ENCODE measurements at regions of chr6 and their contacts with region 1.

Region 1: GRCh38 chr6:133348846-133349245 is 107.7 kb downstream of the EYA4 start:
- DNase-seq: no peak
- ATAC-seq: no peak
- H3K4me3 ChIP-seq: no peak overlapping the region
- H3K27ac ChIP-seq: no peak overlapping the region
- H3K4me1 ChIP-seq: peaks cover 55% of the 10 kb centered on the region
- H3K27me3 ChIP-seq: no peaks in the 10 kb centered on the region
- CTCF ChIP-seq: no peak

Region 2: GRCh38 chr6:133277900-133278545 is 70.8 kb before region 1 on chr6:
- intact Hi-C with region 1: no loop called
- DNase-seq: no peak
- ATAC-seq: peak; percentile 60 to 68 (median 64)
- H3K4me3 ChIP-seq: peak overlapping the region; percentile 33
- H3K27ac ChIP-seq: peak overlapping the region; percentile 60
- H3K4me1 ChIP-seq: peaks cover 19% of the 10 kb centered on the region
- H3K27me3 ChIP-seq: no peaks in the 10 kb centered on the region
- CTCF ChIP-seq: no peak

Region 3: GRCh38 chr6:133309579-133309978 is 39.3 kb before region 1 on chr6:
- intact Hi-C with region 1: loop called in 1 of 2 experiments (anchors 5 kb)
- DNase-seq: no peak
- ATAC-seq: peak; percentile 46 to 85 (median 76)
- H3K4me3 ChIP-seq: no peak overlapping the region
- H3K27ac ChIP-seq: peak overlapping the region; percentile 31
- H3K4me1 ChIP-seq: peaks cover 55% of the 10 kb centered on the region
- H3K27me3 ChIP-seq: no peaks in the 10 kb centered on the region
- CTCF ChIP-seq: no peak

Measured in psoas muscle (tissue), 8 donors.